ENCODE measurements at regions of chr1 and their contacts with region 1.

Region 1: GRCh38 chr1:10438677-10439163 is 8.5 kb downstream of the CENPS start:
- DNase-seq: no peak
- H3K4me3 ChIP-seq: no peak overlapping the region
- H3K4me3 Mint-ChIP-seq: no peak overlapping the region
- H3K27ac Mint-ChIP-seq: no peak overlapping the region
- H3K4me1 ChIP-seq: no peaks in the 10 kb centered on the region
- H3K4me1 Mint-ChIP-seq: no peaks in the 10 kb centered on the region
- H3K27me3 ChIP-seq: no peaks in the 10 kb centered on the region
- H3K27me3 Mint-ChIP-seq: no peaks in the 10 kb centered on the region
- CTCF ChIP-seq: no peak

Region 2: GRCh38 chr1:10387413-10388079 is 51.2 kb before region 1 on chr1:
- CTCF ChIA-PET with region 1: no interaction called
- POLR2A ChIA-PET with region 1: interaction called, 10 read pairs
- intact Hi-C with region 1: no loop called
- DNase-seq: peak in 1 of 2 experiments; percentile 27
- H3K4me3 ChIP-seq: no peak overlapping the region
- H3K4me3 Mint-ChIP-seq: no peak overlapping the region
- H3K27ac Mint-ChIP-seq: peak overlapping the region; percentile 84
- H3K4me1 ChIP-seq: peaks cover 19% of the 10 kb centered on the region
- H3K4me1 Mint-ChIP-seq: no peaks in the 10 kb centered on the region
- H3K27me3 ChIP-seq: no peaks in the 10 kb centered on the region
- H3K27me3 Mint-ChIP-seq: no peaks in the 10 kb centered on the region
- CTCF ChIP-seq: no peak

Region 3: GRCh38 chr1:10459181-10459580 is 20.5 kb after region 1 on chr1:
- CTCF ChIA-PET with region 1: interaction called, 3 read pairs
- POLR2A ChIA-PET with region 1: interaction called, 12 read pairs
- intact Hi-C with region 1: no loop called
- DNase-seq: peak; percentile 52 to 63
- H3K4me3 ChIP-seq: no peak overlapping the region
- H3K4me3 Mint-ChIP-seq: no peak overlapping the region
- H3K27ac Mint-ChIP-seq: no peak overlapping the region
- H3K4me1 ChIP-seq: peaks cover 7% of the 10 kb centered on the region; the same call in 1 of the 2 replicates
- H3K4me1 Mint-ChIP-seq: no peaks in the 10 kb centered on the region
- H3K27me3 ChIP-seq: no peaks in the 10 kb centered on the region
- H3K27me3 Mint-ChIP-seq: no peaks in the 10 kb centered on the region
- CTCF ChIP-seq: no peak

Region 4: GRCh38 chr1:10615332-10615731 is 176.6 kb after region 1 on chr1:
- CTCF ChIA-PET with region 1: no interaction called
- POLR2A ChIA-PET with region 1: no interaction called
- intact Hi-C with region 1: no loop called
- DNase-seq: no peak
- H3K4me3 ChIP-seq: no peak overlapping the region
- H3K4me3 Mint-ChIP-seq: no peak overlapping the region
- H3K27ac Mint-ChIP-seq: no peak overlapping the region
- H3K4me1 ChIP-seq: no peaks in the 10 kb centered on the region
- H3K4me1 Mint-ChIP-seq: no peaks in the 10 kb centered on the region
- H3K27me3 ChIP-seq: no peaks in the 10 kb centered on the region
- H3K27me3 Mint-ChIP-seq: no peaks in the 10 kb centered on the region
- CTCF ChIP-seq: no peak